HEK293T (cell line): ENCODE measurements at regions of chr15 and their contacts with region 1.

Region 1: DNA sequence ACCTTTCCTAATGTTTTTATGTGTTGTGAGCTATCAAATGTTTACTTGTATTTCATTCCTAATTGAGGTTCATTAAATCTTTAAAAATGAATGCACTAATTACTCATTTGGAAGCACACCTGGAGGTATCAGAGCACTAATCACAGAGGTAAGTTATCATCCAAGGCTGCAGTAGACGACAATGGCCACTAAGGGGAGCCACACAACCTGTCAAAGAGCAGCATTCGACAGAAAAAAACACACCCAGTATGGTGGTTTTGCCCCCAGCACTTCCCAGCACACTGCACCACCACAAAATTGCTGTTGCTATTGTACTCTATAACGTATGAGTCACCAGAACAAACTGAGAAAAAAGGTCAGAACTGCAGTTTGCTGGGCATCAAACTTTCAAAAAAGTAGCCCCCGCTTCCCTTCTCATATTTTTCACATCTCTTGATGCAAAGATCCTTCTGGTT is 205.9 kb upstream of the IGF1R start:
- DNase-seq: peak; percentile 82

Region 2: GRCh38 chr15:98413933-98414546 is 28.4 kb before region 1 on chr15:
- CTCF ChIA-PET with region 1: no interaction called
- POLR2A ChIA-PET with region 1: no interaction called
- DNase-seq: no peak

Region 3: DNA sequence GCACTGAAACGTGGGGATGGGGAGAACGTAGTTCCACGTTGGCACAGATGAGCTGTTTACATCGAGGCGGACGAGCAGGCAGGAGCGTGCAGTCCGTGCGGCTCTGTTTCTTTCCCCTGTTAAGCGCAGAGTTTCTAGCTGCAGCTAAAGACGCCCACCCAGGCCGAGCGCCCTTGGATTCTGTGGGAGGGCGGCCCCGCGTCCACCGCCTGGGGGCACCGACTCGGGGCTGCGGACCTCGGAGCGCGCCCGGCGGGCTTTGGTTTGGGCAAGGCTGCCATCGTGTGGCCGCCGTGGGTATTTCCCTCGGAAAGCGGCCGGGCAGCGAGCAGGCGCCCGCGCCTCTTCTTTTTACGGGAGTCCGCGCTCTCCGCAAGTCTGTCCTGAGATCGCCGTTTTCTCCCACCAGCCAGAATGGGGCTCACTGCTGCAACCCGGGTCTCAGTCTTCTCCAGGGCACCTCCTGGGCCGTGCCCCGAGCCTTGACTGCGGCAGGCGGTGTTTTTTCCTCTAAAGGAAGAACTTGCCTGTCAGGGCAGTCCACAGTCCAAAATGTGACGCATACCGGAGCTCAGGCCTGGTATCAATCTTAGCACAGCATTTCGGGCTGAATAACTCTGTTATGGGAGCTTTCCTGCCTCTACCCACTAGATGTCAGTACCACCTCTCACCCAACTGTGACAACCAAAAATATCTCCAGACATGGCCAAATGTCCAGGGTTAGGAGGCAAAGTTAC is 14.0 kb before region 1 on chr15:
- CTCF ChIA-PET with region 1: interaction called, 10 read pairs
- POLR2A ChIA-PET with region 1: no interaction called
- DNase-seq: peak; percentile 92

Region 4: DNA sequence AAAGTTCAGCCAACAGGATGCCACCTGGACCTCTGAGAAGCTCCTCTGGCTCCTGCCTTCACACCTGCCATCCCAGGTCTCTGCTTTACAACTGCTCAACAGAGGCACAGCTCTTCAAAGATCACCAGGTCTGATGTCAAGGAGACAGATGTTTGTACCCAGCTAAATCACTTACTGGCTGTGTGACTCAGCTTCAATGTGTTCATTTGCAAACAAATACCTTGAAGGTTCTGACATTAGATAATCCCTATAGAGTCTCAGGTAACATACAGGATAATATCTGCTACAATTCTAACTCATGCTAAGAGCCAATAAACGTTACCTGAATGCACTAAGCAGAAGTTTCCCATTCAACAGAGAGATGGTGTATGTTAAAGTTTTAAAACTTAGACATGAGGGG is 42.5 kb after region 1 on chr15:
- CTCF ChIA-PET with region 1: no interaction called
- POLR2A ChIA-PET with region 1: no interaction called
- DNase-seq: no peak